ENCODE measurements at regions of chr17 and their contacts with region 1.

Region 1: GRCh38 chr17:58517734-58518609 is 3.5 kb upstream of the MTMR4 start:
- DNase-seq: peak; percentile 98 to 100 (median 99)
- ATAC-seq: peak; percentile 80
- H3K4me3 ChIP-seq: peak overlapping the region; percentile 77 to 94
- H3K4me3 Mint-ChIP-seq: peak overlapping the region; percentile 98
- H3K27ac ChIP-seq: peak overlapping the region; percentile 74 to 82
- H3K27ac Mint-ChIP-seq: peak overlapping the region; percentile 95
- H3K4me1 ChIP-seq: peaks cover 38% of the 10 kb centered on the region
- H3K4me1 Mint-ChIP-seq: peaks cover 42% of the 10 kb centered on the region
- H3K27me3 ChIP-seq: no peaks in the 10 kb centered on the region
- H3K27me3 Mint-ChIP-seq: no peaks in the 10 kb centered on the region
- CTCF ChIP-seq: no peak

Region 2: DNA sequence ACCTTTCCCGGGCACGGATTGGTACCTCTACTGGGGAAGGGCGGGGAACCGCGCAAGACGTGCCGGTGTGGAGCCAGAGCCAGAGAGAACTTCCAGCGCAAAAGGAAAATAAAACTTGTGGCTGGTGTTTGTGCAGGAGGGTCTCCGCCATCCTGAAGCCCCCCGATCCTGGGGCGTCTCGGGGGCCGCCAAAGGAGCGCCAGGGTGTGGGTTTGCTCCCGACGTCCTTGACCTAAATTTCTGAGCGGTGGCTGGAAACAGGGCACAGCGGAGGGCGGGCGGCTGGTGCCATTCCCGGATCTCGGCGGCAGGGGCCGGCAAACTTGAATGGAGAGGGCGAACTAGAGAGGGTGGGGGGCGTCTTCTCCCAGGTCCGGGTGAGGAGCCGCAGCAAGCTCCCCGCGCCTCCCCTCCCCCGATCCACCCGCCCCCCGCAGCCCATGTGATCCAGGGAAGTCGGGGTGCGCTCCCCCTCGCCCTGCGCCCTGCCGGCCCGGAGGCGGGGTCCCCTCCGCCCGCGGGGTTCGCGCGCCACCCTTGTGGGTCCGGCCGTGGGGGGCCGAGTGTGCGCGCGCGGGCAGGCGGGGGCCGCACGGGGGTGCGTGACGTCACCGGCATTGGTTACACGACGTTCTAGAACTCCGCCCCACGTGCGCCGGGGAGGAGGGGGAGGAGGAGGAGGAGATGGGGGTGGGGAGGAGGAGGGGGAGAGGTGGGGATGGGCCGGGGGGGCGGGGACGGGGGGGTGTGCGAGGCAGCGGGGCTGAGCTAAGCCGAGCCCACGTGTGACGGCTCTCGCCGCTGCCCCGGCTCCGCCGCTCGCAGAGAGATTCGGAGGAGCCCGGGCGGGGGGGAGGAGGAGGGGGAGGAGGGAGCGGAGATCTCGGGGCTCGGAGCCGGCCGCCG is 1261.9 kb before region 1 on chr17 and contains the start of gene MSI2:
- CTCF ChIA-PET with region 1: no interaction called
- POLR2A ChIA-PET with region 1: no interaction called
- intact Hi-C with region 1: loop called in 1 of 2 experiments (anchors 5 kb)
- DNase-seq: peak; percentile 87 to 97 (median 92)
- ATAC-seq: peak; percentile 76
- H3K4me3 ChIP-seq: peak within 1 kb of the TSS; percentile 73 to 81
- H3K4me3 Mint-ChIP-seq: peak within 1 kb of the TSS; percentile 92
- H3K27ac ChIP-seq: peak within 1 kb of the TSS; percentile 64 to 84
- H3K27ac Mint-ChIP-seq: peak within 1 kb of the TSS; percentile 93
- H3K4me1 ChIP-seq: peaks cover 37% of the 10 kb centered on the region
- H3K4me1 Mint-ChIP-seq: peaks cover 49% of the 10 kb centered on the region
- H3K27me3 ChIP-seq: no peaks in the 10 kb centered on the region
- H3K27me3 Mint-ChIP-seq: no peaks in the 10 kb centered on the region
- CTCF ChIP-seq: no peak
- total RNA-seq, gene MSI2: 130 to 135 TPM

Region 3: GRCh38 chr17:57955183-57955931 is 562.6 kb before region 1 on chr17 and contains the start of gene CUEDC1:
- CTCF ChIA-PET with region 1: no interaction called
- POLR2A ChIA-PET with region 1: no interaction called
- intact Hi-C with region 1: no loop called
- DNase-seq: peak; percentile 29 to 74 (median 59)
- ATAC-seq: peak; percentile 79
- H3K4me3 ChIP-seq: peak within 1 kb of the TSS; percentile 48 to 53
- H3K4me3 Mint-ChIP-seq: peak within 1 kb of the TSS; percentile 74
- H3K27ac ChIP-seq: no peak within 1 kb of the TSS
- H3K27ac Mint-ChIP-seq: no peak within 1 kb of the TSS
- H3K4me1 ChIP-seq: peaks cover 15% of the 10 kb centered on the region
- H3K4me1 Mint-ChIP-seq: peaks cover 26% of the 10 kb centered on the region
- H3K27me3 ChIP-seq: peaks cover 0 to 5% of the 10 kb centered on the region in 2 experiments
- H3K27me3 Mint-ChIP-seq: peaks cover 7% of the 10 kb centered on the region
- CTCF ChIP-seq: peak; percentile 30
- total RNA-seq, gene CUEDC1: 0.22 TPM in 1 of 2 experiments, not detected in the other

Region 4: DNA sequence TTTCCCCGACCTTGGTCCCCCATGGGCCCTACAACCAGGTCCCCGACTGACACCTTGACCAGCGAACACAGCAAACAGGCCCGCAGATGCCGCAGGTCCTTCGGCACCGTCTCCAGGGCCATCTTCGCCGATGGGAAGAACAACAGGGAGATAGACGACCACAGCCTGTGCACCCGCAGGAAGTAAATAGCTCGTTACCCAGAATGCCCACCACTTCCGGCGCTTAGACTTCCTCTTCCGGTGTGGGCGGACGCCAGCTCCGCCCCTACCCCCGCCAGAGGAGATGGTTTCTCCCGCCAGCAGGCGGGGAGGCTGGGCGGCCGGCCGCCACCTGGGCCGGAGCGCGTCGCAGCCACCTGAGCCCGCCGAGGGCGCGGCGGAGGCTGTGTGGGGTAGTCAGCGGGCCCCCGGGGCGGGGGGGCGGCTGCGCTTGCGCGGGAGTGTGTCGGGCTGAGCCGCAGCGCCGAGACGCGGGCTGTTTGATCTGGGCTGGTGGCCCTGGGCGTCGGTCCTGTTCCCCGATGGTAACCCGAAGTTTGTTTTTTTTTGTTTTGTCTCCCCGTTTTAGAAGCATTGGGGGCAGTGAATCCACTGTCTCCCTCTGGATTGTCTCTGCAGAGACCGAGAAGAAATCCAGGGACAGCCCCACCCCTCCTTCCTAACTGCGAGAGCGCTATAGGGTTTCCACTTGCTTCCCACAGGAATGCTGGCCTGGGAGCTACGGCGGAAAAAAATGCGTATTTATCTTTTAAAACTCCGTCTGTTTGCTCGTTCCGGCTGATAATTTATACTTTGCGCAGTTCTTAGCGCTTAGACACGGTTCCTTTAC is 165.7 kb before region 1 on chr17 and contains the start of gene SUPT4H1:
- CTCF ChIA-PET with region 1: no interaction called
- POLR2A ChIA-PET with region 1: interaction called, 4 read pairs
- intact Hi-C with region 1: loop called (anchors 1 kb)
- DNase-seq: peak; percentile 81 to 97 (median 91)
- ATAC-seq: peak; percentile 88
- H3K4me3 ChIP-seq: peak within 1 kb of the TSS; percentile 69 to 70
- H3K4me3 Mint-ChIP-seq: peak within 1 kb of the TSS; percentile 100
- H3K27ac ChIP-seq: peak within 1 kb of the TSS; percentile 75 to 81
- H3K27ac Mint-ChIP-seq: peak within 1 kb of the TSS; percentile 100
- H3K4me1 ChIP-seq: peaks cover 46% of the 10 kb centered on the region
- H3K4me1 Mint-ChIP-seq: peaks cover 60% of the 10 kb centered on the region
- H3K27me3 ChIP-seq: no peaks in the 10 kb centered on the region
- H3K27me3 Mint-ChIP-seq: no peaks in the 10 kb centered on the region
- CTCF ChIP-seq: no peak
- total RNA-seq, gene SUPT4H1: 45.2 to 59.7 TPM

Region 5: GRCh38 chr17:58531661-58532554 is 13.9 kb after region 1 on chr17:
- CTCF ChIA-PET with region 1: interaction called, 13 read pairs
- POLR2A ChIA-PET with region 1: interaction called, 8 read pairs
- intact Hi-C with region 1: loop called in 1 of 2 experiments (anchors 1 kb)
- DNase-seq: peak; percentile 24 to 79 (median 60)
- ATAC-seq: peak; percentile 96
- H3K4me3 ChIP-seq: peak overlapping the region; percentile 48 to 50
- H3K4me3 Mint-ChIP-seq: peak overlapping the region; percentile 77
- H3K27ac ChIP-seq: no peak overlapping the region
- H3K27ac Mint-ChIP-seq: no peak overlapping the region
- H3K4me1 ChIP-seq: peaks cover 12% of the 10 kb centered on the region
- H3K4me1 Mint-ChIP-seq: peaks cover 5% of the 10 kb centered on the region
- H3K27me3 ChIP-seq: peaks cover 0 to 5% of the 10 kb centered on the region in 2 experiments
- H3K27me3 Mint-ChIP-seq: peaks cover 36% of the 10 kb centered on the region
- CTCF ChIP-seq: no peak

Region 6: GRCh38 chr17:58692239-58693055 is 174.5 kb after region 1 on chr17 and contains the start of gene RAD51C:
- CTCF ChIA-PET with region 1: interaction called, 3 read pairs
- POLR2A ChIA-PET with region 1: no interaction called
- intact Hi-C with region 1: loop called (anchors 1 kb)
- DNase-seq: peak; percentile 67 to 93 (median 85)
- ATAC-seq: peak; percentile 98
- H3K4me3 ChIP-seq: peak within 1 kb of the TSS; percentile 72 to 86
- H3K4me3 Mint-ChIP-seq: peak within 1 kb of the TSS; percentile 91
- H3K27ac ChIP-seq: peak within 1 kb of the TSS; percentile 66 to 82
- H3K27ac Mint-ChIP-seq: peak within 1 kb of the TSS; percentile 89
- H3K4me1 ChIP-seq: peaks cover 17% of the 10 kb centered on the region
- H3K4me1 Mint-ChIP-seq: peaks cover 29% of the 10 kb centered on the region
- H3K27me3 ChIP-seq: no peaks in the 10 kb centered on the region
- H3K27me3 Mint-ChIP-seq: no peaks in the 10 kb centered on the region
- CTCF ChIP-seq: no peak
- total RNA-seq, gene RAD51C: 10.0 to 10.7 TPM

Region 7: GRCh38 chr17:59155439-59156182 is 637.6 kb after region 1 on chr17 and contains the start of gene PRR11:
- CTCF ChIA-PET with region 1: no interaction called
- POLR2A ChIA-PET with region 1: interaction called, 4 read pairs
- intact Hi-C with region 1: loop called in 1 of 2 experiments (anchors 2 kb)
- DNase-seq: peak; percentile 82 to 99 (median 90)
- ATAC-seq: peak; percentile 85
- H3K4me3 ChIP-seq: peak within 1 kb of the TSS; percentile 95 to 97
- H3K4me3 Mint-ChIP-seq: no peak within 1 kb of the TSS
- H3K27ac ChIP-seq: peak within 1 kb of the TSS; percentile 62 to 74
- H3K27ac Mint-ChIP-seq: no peak within 1 kb of the TSS
- H3K4me1 ChIP-seq: peaks cover 15% of the 10 kb centered on the region
- H3K4me1 Mint-ChIP-seq: peaks cover 28% of the 10 kb centered on the region
- H3K27me3 ChIP-seq: no peaks in the 10 kb centered on the region
- H3K27me3 Mint-ChIP-seq: no peaks in the 10 kb centered on the region
- CTCF ChIP-seq: no peak
- total RNA-seq, gene PRR11: 0.30 to 0.69 TPM

Region 8: DNA sequence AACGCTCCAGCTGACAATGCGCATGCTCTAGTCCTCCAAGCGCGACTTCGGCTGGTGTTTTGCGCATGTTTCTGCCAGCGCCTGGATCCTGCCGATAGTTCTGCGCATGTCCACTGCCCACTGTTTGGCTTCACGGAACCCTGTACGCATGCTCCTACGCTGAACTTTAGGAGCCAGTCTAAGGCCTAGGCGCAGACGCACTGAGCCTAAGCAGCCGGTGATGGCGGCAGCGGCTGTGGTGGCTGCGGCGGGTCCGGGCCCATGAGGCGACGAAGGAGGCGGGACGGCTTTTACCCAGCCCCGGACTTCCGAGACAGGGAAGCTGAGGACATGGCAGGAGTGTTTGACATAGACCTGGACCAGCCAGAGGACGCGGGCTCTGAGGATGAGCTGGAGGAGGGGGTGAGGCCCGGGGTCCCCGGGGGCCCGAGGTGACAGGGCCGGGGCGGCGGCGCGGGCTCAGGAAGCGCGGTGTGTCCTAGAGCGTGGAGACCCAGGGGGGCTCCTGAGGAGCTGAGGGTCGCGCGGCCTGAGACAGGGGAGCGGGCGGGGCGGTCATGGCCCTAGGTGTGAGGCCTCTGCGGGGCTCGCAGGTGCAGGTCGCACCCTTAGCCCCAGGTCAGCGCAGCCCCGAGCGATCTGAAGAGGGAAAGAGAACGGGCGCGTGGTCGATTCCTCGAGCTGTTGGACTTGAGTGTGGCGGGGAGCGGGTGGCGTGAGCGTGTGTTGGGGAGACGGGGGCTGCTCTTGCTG is 1375.1 kb after region 1 on chr17 and contains the starts of genes RPS6KB1 and TUBD1:
- CTCF ChIA-PET with region 1: no interaction called
- POLR2A ChIA-PET with region 1: no interaction called
- intact Hi-C with region 1: loop called in 1 of 2 experiments (anchors 10 kb)
- DNase-seq: peak; percentile 94 to 100 (median 97)
- ATAC-seq: peak; percentile 91
- H3K4me3 ChIP-seq: peak within 1 kb of the TSS; percentile 66 to 82
- H3K4me3 Mint-ChIP-seq: peak within 1 kb of the TSS; percentile 100
- H3K27ac ChIP-seq: peak within 1 kb of the TSS; percentile 89 to 93
- H3K27ac Mint-ChIP-seq: peak within 1 kb of the TSS; percentile 100
- H3K4me1 ChIP-seq: peaks cover 37% of the 10 kb centered on the region
- H3K4me1 Mint-ChIP-seq: peaks cover 56% of the 10 kb centered on the region
- H3K27me3 ChIP-seq: no peaks in the 10 kb centered on the region
- H3K27me3 Mint-ChIP-seq: no peaks in the 10 kb centered on the region
- CTCF ChIP-seq: no peak
- total RNA-seq, gene RPS6KB1: 153 to 171 TPM
- total RNA-seq, gene TUBD1: 9.7 to 11.0 TPM